ENCODE measurements at regions of chr11 and their contacts with region 1.

Region 1: GRCh38 chr11:68121067-68121899 is at the start of gene CHKA:
- DNase-seq: peak; percentile 95
- H3K4me3 ChIP-seq: peak within 1 kb of the TSS; percentile 19 to 64 (median 57)
- H3K27ac ChIP-seq: peak within 1 kb of the TSS; percentile 91 to 98 (median 97)
- H3K4me1 ChIP-seq: peaks cover 44 to 47% of the 10 kb centered on the region in 2 donors
- H3K27me3 ChIP-seq: no peaks in the 10 kb centered on the region
- CTCF ChIP-seq: no peak
- POLR2A ChIP-seq: peak; percentile 98 to 100
- total RNA-seq, gene CHKA: 86.8 to 106 (median 93.1) TPM

Region 2: DNA sequence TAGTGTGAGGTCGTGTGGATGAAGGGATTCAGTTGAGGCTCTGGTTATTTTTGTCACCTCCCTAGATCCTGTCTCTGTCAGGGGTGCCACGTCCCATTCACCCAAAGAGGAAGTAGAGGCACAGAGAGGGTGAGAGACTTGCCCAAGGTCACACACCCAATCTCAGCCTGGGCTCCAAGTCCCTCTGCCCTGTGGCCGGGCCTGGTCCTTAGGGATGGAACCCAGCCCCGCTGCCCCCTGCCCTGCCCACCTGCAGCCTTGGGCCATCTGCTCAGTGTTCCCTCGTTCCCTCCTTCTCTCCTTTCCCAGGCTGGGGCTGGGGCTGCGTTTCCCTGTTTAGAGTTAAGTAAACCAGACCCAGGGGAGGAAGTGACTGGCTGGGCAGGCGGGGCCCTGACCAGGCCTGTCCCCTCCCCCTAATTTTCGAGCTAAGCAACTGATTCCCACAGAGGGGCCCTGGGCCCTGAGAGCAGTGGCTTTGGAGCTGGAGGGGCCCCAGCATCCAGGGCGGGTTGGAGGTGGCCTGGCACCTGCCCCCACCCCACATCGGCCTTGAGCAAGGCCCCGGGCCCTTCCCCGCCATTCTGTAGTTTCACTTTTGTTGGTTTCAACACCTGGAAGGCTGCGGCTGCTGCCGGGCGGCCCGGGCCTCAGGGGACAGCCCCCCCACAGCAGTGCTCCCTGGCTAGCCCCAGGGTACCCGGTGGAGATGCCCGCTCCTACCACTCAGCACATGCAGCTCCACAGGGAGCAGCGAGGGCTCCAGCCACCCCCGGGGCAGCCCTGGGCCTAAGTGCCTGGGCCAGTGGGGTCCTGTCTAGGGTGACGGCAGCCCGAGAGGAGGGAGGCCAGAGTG is 81.0 kb before region 1 on chr11:
- intact Hi-C with region 1: loop called (anchors 5 kb)
- DNase-seq: peak; percentile 71 to 76
- H3K4me3 ChIP-seq: peak overlapping the region in 1 of 3 donors; percentile 48
- H3K27ac ChIP-seq: peak overlapping the region; percentile 88 to 94 (median 91)
- H3K4me1 ChIP-seq: peaks cover 35 to 42% of the 10 kb centered on the region in 2 donors
- H3K27me3 ChIP-seq: no peaks in the 10 kb centered on the region
- CTCF ChIP-seq: no peak
- POLR2A ChIP-seq: peak in 1 of 2 donors; percentile 38

Measured in thyroid gland (tissue), 4 donors.